Activated CD4-positive, alpha-beta T cell treated with anti-CD3 and anti-CD28 coated beads for 36 hours (primary cell): ENCODE measurements at regions of chr15 and their contacts with region 1.

Region 1: DNA sequence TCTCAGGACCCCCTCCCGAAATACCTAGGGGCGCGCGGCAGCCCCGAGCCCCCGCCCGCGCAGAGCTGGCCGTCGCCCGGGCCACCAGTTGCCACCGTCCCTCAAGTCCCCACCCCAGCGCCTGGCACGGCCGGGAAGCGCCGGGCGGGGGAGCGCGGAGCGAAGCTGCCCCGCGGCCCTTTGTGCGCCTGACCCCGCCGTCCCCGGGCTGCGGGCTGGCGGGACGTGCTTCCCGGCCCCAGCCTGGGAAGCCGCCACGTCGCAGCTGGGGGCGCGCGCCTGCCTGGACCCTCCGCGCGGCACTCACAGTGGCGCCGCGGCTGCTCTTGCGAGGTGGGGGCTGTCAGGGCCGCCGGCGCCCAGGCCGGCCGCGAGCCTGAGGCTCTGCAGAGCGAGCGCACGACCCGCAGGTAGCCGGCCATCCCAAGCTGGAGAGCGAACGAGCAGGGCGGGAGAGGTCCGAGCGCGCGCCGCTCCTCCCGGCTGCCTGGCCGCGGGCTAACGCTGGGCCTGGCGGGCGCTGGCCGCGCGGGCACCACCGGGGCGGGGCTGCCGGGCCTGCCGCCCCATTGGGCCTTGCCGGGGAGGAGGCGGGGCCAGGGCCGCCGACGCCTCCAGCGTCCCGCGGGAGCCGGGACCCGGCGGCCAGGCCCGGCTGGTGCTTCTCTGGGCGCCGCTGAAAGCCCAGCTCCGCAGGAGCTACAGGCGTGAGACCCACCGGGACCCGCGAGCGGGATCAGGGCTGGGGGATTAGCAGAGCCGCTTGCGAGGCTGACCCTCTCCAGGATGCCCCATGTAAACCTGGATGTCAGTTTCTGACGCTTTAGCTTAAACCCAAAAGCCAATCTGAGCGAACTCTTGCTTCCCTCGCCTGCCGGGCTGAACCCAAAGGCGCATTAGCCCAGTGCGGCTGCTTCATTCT is at the start of gene IDH2:
- DNase-seq: peak; percentile 85
- ATAC-seq: peak; percentile 73
- H3K4me3 Mint-ChIP-seq: peak within 1 kb of the TSS; percentile 86
- H3K27ac Mint-ChIP-seq: peak within 1 kb of the TSS; percentile 90
- H3K4me1 Mint-ChIP-seq: peaks cover 47% of the 10 kb centered on the region
- H3K27me3 Mint-ChIP-seq: no peaks in the 10 kb centered on the region
- total RNA-seq, gene IDH2: 176 to 182 TPM

Region 2: GRCh38 chr15:89690276-89691218 is 411.7 kb before region 1 on chr15 and contains the starts of genes PEX11A and WDR93:
- CTCF ChIA-PET with region 1: no interaction called
- POLR2A ChIA-PET with region 1: no interaction called
- intact Hi-C with region 1: loop called in 1 of 2 experiments (anchors 2 kb)
- DNase-seq: peak; percentile 87
- ATAC-seq: peak; percentile 92
- H3K4me3 Mint-ChIP-seq: peak within 1 kb of the TSS; percentile 85
- H3K27ac Mint-ChIP-seq: peak within 1 kb of the TSS; percentile 82
- H3K4me1 Mint-ChIP-seq: peaks cover 12% of the 10 kb centered on the region
- H3K27me3 Mint-ChIP-seq: no peaks in the 10 kb centered on the region
- total RNA-seq, gene PEX11A: 4.7 to 5.3 TPM
- total RNA-seq, gene WDR93: not detected

Region 3: DNA sequence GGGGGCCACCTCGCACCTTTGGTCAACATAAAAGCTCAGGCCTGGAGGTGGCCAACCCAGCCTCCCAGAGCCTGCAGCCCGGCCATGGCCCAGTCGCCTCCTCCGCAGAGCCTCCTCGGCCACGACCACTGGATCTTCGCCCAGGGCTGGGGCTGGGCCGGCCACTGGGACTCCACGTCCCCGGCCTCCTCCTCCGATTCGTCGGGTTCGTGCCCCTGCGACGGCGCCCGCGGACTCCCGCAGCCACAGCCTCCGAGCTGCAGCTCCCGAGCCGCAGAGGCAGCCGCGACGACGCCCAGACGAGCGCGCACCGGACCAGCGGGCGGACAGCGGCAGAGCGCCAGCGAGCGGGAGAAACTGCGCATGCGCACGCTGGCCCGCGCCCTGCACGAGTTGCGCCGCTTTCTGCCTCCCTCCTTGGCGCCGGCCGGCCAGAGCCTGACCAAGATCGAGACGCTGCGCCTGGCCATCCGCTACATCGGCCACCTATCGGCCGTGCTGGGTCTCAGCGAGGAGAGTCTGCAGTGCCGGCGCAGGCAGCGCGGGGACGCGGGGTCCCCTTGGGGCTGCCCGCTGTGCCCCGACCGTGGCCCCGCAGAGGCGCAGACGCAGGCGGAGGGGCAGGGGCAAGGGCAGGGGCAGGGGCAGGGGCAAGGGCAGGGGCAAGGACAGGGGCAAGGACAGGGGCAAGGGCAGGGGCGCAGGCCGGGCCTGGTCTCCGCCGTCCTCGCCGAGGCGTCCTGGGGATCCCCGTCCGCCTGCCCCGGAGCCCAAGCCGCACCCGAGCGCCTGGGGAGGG is 325.8 kb before region 1 on chr15 and contains the start of gene MESP2:
- CTCF ChIA-PET with region 1: no interaction called
- POLR2A ChIA-PET with region 1: no interaction called
- intact Hi-C with region 1: no loop called
- DNase-seq: peak; percentile 68
- ATAC-seq: peak; percentile 57
- H3K4me3 Mint-ChIP-seq: peak within 1 kb of the TSS; percentile 57
- H3K27ac Mint-ChIP-seq: no peak within 1 kb of the TSS
- H3K4me1 Mint-ChIP-seq: peaks cover 10% of the 10 kb centered on the region
- H3K27me3 Mint-ChIP-seq: peaks cover 13% of the 10 kb centered on the region
- total RNA-seq, gene MESP2: 0.14 to 0.30 TPM

Region 4: DNA sequence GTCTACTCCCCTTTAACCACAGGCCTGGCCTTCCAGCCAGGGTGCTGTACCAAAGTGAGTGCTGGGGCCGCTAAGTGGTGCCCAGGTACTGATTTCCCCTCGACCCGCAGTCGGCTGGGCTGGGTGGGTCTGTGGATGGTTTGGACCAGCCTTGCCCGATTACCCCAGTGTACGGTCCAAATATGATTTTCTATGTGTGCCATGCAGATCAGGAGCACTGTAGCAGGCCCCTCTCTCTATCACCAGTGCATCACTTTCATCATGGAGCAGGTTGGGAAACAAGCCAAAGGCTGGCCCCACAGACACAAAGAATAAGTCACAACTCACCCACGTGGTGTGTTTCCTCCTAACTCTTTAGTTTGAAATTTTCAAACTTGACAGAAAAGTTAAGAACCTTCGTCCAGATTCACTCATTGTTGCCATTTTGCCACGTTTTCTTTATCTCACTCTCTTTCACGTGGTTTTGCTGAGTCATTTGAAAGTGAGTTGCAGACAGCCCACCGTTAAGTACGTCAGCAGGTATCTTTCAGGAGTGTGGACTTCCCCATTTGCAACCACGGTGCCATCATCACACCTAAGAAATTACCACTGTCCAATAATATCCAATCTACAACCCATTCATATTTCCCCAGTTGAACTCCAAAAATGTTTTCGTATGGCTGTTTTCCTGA is 64.1 kb before region 1 on chr15:
- CTCF ChIA-PET with region 1: no interaction called
- POLR2A ChIA-PET with region 1: no interaction called
- intact Hi-C with region 1: loop called (anchors 1 kb)
- DNase-seq: peak; percentile 82
- ATAC-seq: peak; percentile 82
- H3K4me3 Mint-ChIP-seq: peak overlapping the region; percentile 6
- H3K27ac Mint-ChIP-seq: peak overlapping the region; percentile 95
- H3K4me1 Mint-ChIP-seq: peaks cover 79% of the 10 kb centered on the region
- H3K27me3 Mint-ChIP-seq: no peaks in the 10 kb centered on the region

Region 5: DNA sequence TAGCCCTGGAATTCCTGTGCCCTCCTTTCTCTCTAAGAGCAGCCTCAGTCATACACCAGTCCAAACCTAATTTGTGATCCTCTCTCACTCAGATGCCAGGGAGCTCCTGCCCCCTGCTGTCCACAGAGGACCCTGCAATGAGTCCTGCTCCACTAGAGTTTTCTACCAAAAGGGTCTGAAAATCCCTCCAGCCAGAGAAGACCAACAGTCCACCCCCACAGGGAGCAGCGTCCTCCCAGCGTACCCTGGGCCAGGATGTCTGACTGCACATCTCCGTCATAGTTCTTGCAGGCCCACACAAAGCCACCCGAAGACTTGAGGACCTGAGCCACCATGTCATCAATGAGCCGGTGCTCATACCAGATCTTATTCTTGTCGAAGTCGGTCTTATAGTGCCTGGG is 15.4 kb before region 1 on chr15:
- CTCF ChIA-PET with region 1: interaction called, 8 read pairs
- POLR2A ChIA-PET with region 1: interaction called, 5 read pairs
- intact Hi-C with region 1: loop called in 1 of 2 experiments (anchors 1 kb)
- DNase-seq: peak; percentile 75
- ATAC-seq: peak; percentile 79
- H3K4me3 Mint-ChIP-seq: no peak overlapping the region
- H3K27ac Mint-ChIP-seq: peak overlapping the region; percentile 75
- H3K4me1 Mint-ChIP-seq: peaks cover 6% of the 10 kb centered on the region
- H3K27me3 Mint-ChIP-seq: no peaks in the 10 kb centered on the region

Region 6: DNA sequence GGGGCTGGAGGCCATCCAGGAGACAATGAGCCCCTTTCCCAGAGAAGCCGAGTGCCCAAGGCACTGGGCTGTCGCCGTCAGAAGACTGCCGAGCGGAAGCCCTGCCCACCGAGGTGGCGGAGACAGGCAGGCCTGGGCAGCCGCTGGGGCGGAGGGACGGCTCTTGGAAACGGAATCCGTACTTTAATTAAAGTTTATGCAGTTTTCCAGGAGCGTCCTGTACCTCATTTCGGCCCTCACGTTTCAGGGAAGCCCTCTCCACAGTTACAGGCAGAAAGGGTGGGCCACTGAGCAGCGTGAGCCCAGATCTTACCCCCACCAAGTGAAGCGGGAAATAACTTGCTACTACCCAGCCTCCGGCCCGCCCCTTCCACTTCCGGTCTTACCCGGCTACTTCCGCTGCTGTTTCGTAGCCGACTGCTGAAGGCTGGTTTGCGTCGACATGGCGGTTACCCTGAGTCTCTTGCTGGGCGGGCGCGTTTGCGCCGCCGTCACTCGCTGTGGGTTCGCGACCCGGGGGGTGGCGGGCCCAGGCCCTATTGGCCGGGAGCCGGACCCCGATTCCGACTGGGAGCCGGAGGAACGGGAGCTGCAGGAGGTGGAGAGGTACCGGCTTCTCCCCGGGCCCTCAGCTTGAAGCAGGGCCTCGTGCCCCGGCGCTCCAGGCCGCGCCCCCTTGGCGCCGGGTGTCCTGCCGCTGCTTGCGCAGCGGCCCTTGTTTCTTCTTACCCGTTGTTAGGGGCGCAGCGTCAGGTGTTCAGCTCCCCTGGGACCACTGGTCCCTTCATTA is 163.2 kb after region 1 on chr15 and contains the start of gene NGRN:
- CTCF ChIA-PET with region 1: no interaction called
- POLR2A ChIA-PET with region 1: no interaction called
- intact Hi-C with region 1: loop called in 1 of 2 experiments (anchors 1 kb)
- DNase-seq: peak; percentile 95
- ATAC-seq: peak; percentile 87
- H3K4me3 Mint-ChIP-seq: peak within 1 kb of the TSS; percentile 98
- H3K27ac Mint-ChIP-seq: peak within 1 kb of the TSS; percentile 99
- H3K4me1 Mint-ChIP-seq: peaks cover 37% of the 10 kb centered on the region
- H3K27me3 Mint-ChIP-seq: no peaks in the 10 kb centered on the region
- total RNA-seq, gene NGRN: 22.0 to 23.9 TPM

Region 7: GRCh38 chr15:90660195-90660998 is 558.2 kb after region 1 on chr15:
- CTCF ChIA-PET with region 1: no interaction called
- POLR2A ChIA-PET with region 1: no interaction called
- intact Hi-C with region 1: loop called in 1 of 2 experiments (anchors 2 kb)
- DNase-seq: peak; percentile 89
- ATAC-seq: peak; percentile 96
- H3K4me3 Mint-ChIP-seq: peak overlapping the region; percentile 52
- H3K27ac Mint-ChIP-seq: peak overlapping the region; percentile 43
- H3K4me1 Mint-ChIP-seq: peaks cover 73% of the 10 kb centered on the region
- H3K27me3 Mint-ChIP-seq: peaks cover 47% of the 10 kb centered on the region